HCT116 (cell line): ENCODE measurements at regions of chr6 and their contacts with region 1.

Region 1: DNA sequence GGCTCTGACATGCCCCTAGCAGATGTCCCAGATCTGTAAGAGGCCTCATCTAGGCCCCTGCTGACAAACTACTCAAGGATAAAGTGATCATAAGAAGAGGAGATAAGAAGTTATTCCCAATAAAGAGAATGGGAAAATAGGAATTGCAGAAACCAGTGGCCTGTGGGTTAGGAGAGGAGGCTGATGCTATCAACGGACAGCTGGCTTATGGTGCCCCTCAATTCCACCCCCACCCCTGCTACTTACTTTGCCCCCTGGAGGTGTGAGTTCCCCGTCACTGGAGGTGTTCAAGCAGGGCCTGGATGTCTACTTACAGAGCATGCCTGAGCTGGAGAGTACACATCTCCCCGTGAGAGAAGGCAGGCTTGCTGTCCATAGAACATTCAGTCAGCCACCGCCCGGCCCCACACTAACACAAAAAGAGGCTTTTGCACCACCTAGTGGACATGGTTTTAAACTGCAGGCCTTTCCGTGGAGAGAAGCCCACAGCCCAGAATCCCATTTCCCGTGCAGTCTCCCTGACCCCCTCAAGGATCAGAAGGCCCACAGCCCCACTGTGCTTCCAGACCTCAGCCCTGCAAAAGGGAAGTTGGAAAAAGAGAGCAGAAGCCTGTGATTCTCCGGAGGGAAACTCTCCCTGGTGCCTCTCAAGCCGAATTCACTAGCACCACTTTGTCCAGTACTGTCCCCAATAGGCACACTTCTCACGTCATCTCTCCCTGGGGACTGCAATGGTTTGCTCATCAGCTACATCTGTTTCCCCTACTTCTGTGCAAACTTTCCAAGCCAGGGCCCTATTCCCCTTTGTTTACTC is 23.8 kb upstream of the BNIP5 start:
- DNase-seq: peak; percentile 60
- ATAC-seq: peak; percentile 97
- H3K4me3 ChIP-seq: no peak overlapping the region
- H3K27ac ChIP-seq: no peak overlapping the region
- H3K4me1 ChIP-seq: peaks cover 0 to 4% of the 10 kb centered on the region in 2 experiments; a peak in 1 of 4 replicates
- H3K27me3 ChIP-seq: no peaks in the 10 kb centered on the region
- CTCF ChIP-seq: peak; percentile 77 to 86 (median 85)
- POLR2A ChIP-seq: no peak
- RAD21 ChIP-seq: peak; percentile 94

Region 2: GRCh38 chr6:35663447-35664235 is 696.8 kb before region 1 on chr6:
- CTCF ChIA-PET with region 1: no interaction called
- POLR2A ChIA-PET with region 1: no interaction called
- RAD21 ChIA-PET with region 1: no interaction called
- intact Hi-C with region 1: no loop called
- DNase-seq: no peak
- ATAC-seq: no peak
- H3K4me3 ChIP-seq: no peak overlapping the region
- H3K27ac ChIP-seq: no peak overlapping the region
- H3K4me1 ChIP-seq: peaks cover 7 to 15% of the 10 kb centered on the region in 2 experiments; a peak in 2 of 4 replicates
- H3K27me3 ChIP-seq: no peaks in the 10 kb centered on the region
- CTCF ChIP-seq: no peak
- POLR2A ChIP-seq: no peak
- RAD21 ChIP-seq: no peak

Region 3: DNA sequence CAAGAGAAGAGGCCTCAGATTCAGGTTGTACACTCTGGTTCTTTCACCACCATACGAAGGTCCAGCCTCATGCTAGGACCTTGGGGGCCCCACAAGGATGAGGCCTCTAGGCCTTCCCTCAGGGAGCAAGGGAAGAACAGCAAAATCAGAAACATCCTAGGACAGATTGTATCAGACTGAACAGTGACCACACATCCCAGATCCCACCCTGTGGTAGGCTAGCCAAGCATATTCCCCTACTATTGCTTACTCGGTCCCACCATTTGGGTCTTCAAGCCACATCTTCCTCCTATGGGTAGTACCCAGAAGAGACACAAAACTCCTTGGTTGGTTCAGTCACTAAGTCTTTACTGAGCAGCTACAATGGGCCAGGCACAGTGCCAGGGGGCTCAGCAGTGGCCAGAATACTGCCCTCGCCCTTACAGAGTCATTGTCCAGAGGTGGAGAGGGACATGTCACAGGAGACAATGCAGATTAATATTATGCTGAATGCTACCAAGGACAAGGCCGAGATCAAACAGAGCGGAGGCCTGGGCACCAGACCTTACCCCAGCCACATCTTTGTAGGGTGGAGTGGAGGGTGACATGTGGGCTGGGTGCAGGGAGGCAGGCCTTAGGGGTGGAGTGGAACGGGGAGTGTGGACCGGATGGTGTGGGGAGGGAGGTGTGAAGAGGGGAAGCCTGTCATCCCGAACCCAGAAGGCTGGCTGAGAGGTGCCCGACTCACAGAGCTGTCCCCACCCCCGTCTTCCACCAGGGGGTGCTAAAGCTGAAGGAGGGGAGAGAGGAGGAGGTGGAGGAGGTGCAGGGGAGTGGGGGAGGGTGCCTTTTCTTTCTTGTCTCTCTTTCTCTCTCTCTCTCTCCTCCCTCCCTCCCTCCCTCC is 236.9 kb before region 1 on chr6:
- CTCF ChIA-PET with region 1: interaction called, 5 read pairs
- POLR2A ChIA-PET with region 1: interaction called, 3 read pairs
- RAD21 ChIA-PET with region 1: no interaction called
- intact Hi-C with region 1: loop called (anchors 1 kb)
- DNase-seq: peak; percentile 58
- ATAC-seq: peak; percentile 91
- H3K4me3 ChIP-seq: no peak overlapping the region
- H3K27ac ChIP-seq: no peak overlapping the region
- H3K4me1 ChIP-seq: peaks cover 16 to 42% of the 10 kb centered on the region in 2 experiments
- H3K27me3 ChIP-seq: no peaks in the 10 kb centered on the region
- CTCF ChIP-seq: peak in 2 of 3 experiments; percentile 67 to 86; a peak in 4 of 6 replicates
- POLR2A ChIP-seq: no peak
- RAD21 ChIP-seq: no peak

Region 4: GRCh38 chr6:36392621-36393020 is 32.2 kb after region 1 on chr6:
- CTCF ChIA-PET with region 1: no interaction called
- POLR2A ChIA-PET with region 1: no interaction called
- RAD21 ChIA-PET with region 1: no interaction called
- intact Hi-C with region 1: no loop called
- DNase-seq: no peak
- ATAC-seq: no peak
- H3K4me3 ChIP-seq: no peak overlapping the region
- H3K27ac ChIP-seq: no peak overlapping the region
- H3K4me1 ChIP-seq: peaks cover 0 to 6% of the 10 kb centered on the region in 2 experiments; a peak in 1 of 4 replicates
- H3K27me3 ChIP-seq: no peaks in the 10 kb centered on the region
- CTCF ChIP-seq: 0 out of 6 replicates have a peak, but pooled peaks of 1 of the 3 experiments have one; percentile 15
- POLR2A ChIP-seq: no peak
- RAD21 ChIP-seq: no peak